ENCODE measurements at regions of chr21 and their contacts with region 1.

Region 1: DNA sequence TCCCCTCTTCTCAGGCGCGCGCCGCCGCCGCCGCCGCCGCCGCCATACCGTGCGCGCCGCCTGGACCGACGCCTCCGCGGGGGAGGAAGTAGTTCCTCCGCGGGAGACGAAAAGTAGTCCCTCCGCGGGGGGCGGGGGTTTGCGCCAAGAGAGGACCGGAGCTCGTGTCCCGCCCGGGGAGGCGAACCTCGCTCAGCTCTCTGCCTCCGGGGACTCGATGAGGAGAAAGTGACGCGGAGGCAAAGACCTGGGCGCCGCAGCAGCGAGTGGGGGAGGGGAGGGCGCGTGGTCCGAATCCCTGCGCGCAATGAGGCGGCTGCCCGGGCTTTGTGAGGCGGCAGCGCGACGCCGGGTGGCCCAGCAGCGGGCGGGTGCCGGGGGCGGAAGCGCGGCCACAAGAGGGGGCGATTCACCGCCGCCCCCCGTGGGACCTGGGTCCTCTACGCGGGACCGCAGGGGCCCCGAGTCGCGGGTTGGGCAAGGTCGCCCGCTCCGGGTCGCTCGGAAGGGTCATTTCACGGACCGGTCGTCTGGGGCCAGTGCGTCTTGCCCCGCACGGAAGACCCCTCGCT is at the start of gene BRWD1:
- DNase-seq: peak; percentile 86
- ATAC-seq: peak; percentile 49
- H3K4me3 Mint-ChIP-seq: peak within 1 kb of the TSS; percentile 94
- H3K27ac Mint-ChIP-seq: peak within 1 kb of the TSS; percentile 92
- H3K4me1 Mint-ChIP-seq: peaks cover 47% of the 10 kb centered on the region
- H3K27me3 Mint-ChIP-seq: no peaks in the 10 kb centered on the region
- CTCF ChIP-seq: no peak
- total RNA-seq, gene BRWD1: 36.9 and 40.3 TPM in 2 replicates

Region 2: DNA sequence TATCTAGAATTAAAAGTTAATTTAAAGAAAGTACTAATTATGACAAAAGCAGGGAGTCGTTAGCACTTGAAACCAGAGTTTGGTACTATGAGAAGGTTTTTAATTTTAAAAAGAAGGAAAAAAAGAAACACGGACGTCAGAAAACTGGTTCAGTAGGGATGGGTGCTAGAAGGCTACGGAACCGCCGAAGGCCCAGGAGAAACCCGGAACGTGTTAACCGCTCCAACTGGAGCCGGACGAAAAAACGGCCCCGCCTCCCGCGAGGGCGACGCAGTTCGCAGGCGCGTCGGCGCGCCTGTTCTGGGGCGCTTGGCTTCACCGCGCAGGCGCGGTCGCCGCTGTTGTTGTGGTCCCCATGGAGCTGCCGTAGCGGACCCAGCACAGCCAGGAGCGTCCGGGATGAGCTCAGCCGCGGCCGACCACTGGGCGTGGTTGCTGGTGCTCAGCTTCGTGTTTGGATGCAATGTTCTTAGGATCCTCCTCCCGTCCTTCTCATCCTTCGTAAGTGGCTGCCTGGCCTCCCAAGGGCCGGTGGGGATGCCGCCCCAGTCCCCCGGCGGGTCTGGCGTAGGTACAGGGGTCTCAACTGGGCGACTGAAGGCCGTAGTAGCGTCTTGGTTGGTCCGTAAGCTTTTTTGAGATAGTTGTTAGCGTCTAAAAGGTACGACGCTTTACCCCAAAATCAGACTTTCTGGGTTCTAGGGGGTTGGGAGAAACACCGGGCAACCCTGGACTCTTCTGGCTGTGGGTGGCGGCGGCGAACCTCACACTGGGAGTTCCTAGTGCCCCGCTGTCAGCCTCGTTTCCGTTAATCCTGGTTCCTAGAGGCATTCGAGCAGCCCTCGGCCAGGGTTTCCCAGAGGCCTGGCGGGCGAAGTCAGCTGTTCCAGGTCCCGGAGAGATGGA is 66.6 kb after region 1 on chr21:
- CTCF ChIA-PET with region 1: no interaction called
- POLR2A ChIA-PET with region 1: interaction called, 6 read pairs
- intact Hi-C with region 1: loop called (anchors 1 kb)
- DNase-seq: peak; percentile 82
- ATAC-seq: peak; percentile 99
- H3K4me3 Mint-ChIP-seq: peak overlapping the region; percentile 93
- H3K27ac Mint-ChIP-seq: peak overlapping the region; percentile 78
- H3K4me1 Mint-ChIP-seq: peaks cover 12% of the 10 kb centered on the region
- H3K27me3 Mint-ChIP-seq: no peaks in the 10 kb centered on the region
- CTCF ChIP-seq: no peak

Region 3: DNA sequence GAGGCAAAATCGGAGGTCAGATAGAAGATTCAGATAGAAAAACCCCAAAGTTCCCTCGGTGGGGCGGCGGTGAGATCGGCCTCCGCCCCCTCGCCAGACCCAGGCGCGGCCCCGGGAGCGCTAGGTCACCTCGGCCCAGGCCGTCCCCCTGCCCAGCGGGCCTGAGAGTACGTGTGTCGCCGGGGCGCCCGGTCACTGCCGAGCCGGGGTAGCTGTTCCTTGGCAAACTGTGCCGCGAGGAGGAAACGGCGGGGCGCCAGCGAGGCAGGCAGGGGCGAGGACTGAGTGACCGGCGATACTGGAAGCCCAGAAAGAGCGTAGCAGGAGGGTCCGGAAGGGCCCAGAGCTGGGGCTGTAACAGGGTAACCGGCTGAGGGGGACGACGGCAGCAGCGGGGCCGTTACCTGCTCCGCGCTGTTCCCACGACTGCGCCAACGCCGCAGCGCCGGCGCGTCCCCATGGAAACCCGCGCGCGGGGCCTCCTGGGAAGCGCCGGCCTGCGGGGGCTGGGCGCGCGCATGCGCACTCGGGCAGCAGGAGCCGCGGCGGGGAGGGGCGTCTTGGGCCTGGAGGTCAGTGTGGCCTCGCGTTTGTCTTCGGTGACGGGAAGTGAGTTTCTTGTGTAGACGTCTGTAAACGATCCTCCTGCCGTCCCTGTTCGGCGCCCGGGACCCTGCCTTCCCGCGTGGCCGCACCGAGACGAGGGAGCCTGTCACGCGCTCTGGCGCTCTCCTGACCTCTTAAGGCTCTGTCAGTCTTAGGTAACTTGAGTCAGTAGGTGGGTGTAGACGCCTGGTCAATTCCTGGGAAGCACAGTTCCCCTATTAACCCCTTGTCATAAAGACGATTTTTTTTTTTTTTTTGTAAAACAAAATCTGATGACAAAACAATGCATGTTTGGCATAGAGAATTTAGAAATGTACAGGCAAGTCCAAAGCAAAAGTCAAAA is 131.9 kb after region 1 on chr21 and contains the start of gene LCA5L:
- CTCF ChIA-PET with region 1: no interaction called
- POLR2A ChIA-PET with region 1: interaction called, 7 read pairs
- intact Hi-C with region 1: loop called (anchors 2 kb)
- DNase-seq: peak; percentile 95
- ATAC-seq: peak; percentile 91
- H3K4me3 Mint-ChIP-seq: peak within 1 kb of the TSS; percentile 94
- H3K27ac Mint-ChIP-seq: peak within 1 kb of the TSS; percentile 95
- H3K4me1 Mint-ChIP-seq: peaks cover 12% of the 10 kb centered on the region
- H3K27me3 Mint-ChIP-seq: peaks cover 12% of the 10 kb centered on the region
- CTCF ChIP-seq: no peak
- total RNA-seq, gene LCA5L: 0.33 and 0.86 TPM in 2 replicates